ENCODE measurements at regions of chr14 and their contacts with region 1.

Region 1: GRCh38 chr14:95157327-95158189 is at the start of gene DICER1:
- DNase-seq: peak; percentile 94
- H3K4me3 Mint-ChIP-seq: peak within 1 kb of the TSS; percentile 92
- H3K27ac Mint-ChIP-seq: peak within 1 kb of the TSS; percentile 96
- H3K4me1 Mint-ChIP-seq: peaks cover 34% of the 10 kb centered on the region
- H3K27me3 Mint-ChIP-seq: no peaks in the 10 kb centered on the region
- total RNA-seq, gene DICER1: 38.1 to 42.3 TPM

Region 2: GRCh38 chr14:94080471-94081289 is 1076.9 kb before region 1 on chr14 and contains the start of gene DDX24:
- CTCF ChIA-PET with region 1: no interaction called
- intact Hi-C with region 1: loop called (anchors 5 kb)
- DNase-seq: peak; percentile 98
- H3K4me3 Mint-ChIP-seq: peak within 1 kb of the TSS; percentile 98
- H3K27ac Mint-ChIP-seq: peak within 1 kb of the TSS; percentile 98
- H3K4me1 Mint-ChIP-seq: peaks cover 44% of the 10 kb centered on the region
- H3K27me3 Mint-ChIP-seq: no peaks in the 10 kb centered on the region
- total RNA-seq, gene DDX24: 190 to 200 TPM

Region 3: GRCh38 chr14:95140060-95140858 is 17.3 kb before region 1 on chr14:
- CTCF ChIA-PET with region 1: interaction called, 4 read pairs
- intact Hi-C with region 1: loop called (anchors 1 kb)
- DNase-seq: no peak
- H3K4me3 Mint-ChIP-seq: no peak overlapping the region
- H3K27ac Mint-ChIP-seq: peak overlapping the region; percentile 39
- H3K4me1 Mint-ChIP-seq: peaks cover 71% of the 10 kb centered on the region
- H3K27me3 Mint-ChIP-seq: no peaks in the 10 kb centered on the region

Region 4: DNA sequence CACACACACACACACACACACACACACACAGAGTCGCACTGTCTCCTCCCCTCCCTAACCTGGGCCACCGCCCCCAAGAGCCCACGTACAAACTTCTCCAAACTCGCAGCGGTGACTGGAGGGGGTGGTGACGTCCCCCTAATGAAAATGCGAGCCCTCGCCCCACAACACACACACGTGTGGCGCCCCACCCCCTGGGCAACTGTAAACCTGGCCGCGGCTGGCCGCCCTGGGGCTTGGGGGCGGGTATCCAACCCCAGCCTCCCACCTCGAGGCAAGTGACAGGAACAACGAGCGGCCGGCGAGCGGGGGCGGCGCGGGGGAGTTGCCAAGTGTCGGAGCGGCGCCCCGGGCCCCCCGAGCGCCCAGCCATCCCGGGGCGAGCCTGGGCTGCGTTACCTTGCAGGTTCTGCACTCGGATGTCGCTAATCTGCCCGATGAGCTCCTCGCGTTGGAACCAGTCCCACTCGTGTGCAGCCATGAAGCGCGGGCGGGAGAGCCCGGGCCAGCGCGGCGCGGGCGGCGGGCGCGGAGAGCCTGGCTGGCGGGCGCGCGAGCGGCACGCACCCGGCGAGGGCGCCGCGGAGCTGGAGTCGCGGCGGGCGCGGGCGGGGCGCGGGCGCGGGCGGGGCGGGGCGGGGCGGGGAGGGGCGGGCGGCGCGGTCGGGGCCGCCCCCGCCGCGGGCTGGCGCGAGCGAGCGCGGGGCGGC is 161.9 kb after region 1 on chr14 and contains the start of gene CLMN:
- CTCF ChIA-PET with region 1: no interaction called
- intact Hi-C with region 1: loop called (anchors 5 kb)
- DNase-seq: peak; percentile 35
- H3K4me3 Mint-ChIP-seq: peak within 1 kb of the TSS; percentile 69
- H3K27ac Mint-ChIP-seq: no peak within 1 kb of the TSS
- H3K4me1 Mint-ChIP-seq: peaks cover 11% of the 10 kb centered on the region
- H3K27me3 Mint-ChIP-seq: peaks cover 22% of the 10 kb centered on the region
- total RNA-seq, gene CLMN: 1.9 to 2.6 TPM

Region 5: DNA sequence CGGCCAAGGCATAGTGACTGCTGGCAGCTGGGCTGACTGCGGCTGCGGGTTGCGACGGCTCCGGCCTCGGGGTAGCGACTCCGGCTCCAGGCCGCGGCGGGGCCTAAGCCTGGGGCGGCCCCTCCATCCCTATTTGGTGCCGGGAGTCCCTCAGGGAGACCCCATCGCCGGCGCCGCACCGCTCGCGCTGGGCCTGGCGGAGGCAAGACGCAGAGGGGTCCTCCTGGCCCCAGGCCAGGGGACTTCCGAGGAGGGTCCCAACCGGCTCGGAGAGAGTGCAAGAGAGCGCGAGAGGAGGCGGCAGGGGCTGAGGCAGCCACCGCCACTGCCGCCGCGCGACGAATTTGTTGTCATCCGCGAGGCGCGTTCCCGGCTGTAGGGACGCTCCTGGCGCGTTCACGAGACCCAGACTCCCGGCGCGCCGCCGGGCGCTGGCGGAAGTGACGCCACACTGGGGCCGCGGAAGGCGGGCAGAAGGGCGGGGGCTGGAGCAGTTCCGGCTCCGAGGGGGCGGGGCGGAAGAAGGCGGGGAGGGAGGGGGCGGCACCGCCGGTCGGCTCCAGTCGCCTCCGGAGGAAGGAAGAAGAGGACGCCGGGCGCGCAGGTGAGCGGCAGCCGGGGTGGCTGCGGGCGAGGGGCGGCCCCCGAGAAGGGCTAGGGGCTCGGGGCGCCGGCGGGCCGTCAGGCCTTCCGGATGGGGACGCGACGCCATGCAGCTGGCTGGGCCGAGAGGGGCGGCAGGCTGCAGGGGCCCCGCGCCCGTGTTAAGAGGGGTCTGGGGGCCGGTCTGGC is 1205.6 kb after region 1 on chr14 and contains the starts of genes ATG2B and GSKIP:
- CTCF ChIA-PET with region 1: no interaction called
- intact Hi-C with region 1: loop called (anchors 10 kb)
- DNase-seq: peak; percentile 97
- H3K4me3 Mint-ChIP-seq: peak within 1 kb of the TSS; percentile 92
- H3K27ac Mint-ChIP-seq: peak within 1 kb of the TSS; percentile 84
- H3K4me1 Mint-ChIP-seq: peaks cover 54% of the 10 kb centered on the region
- H3K27me3 Mint-ChIP-seq: no peaks in the 10 kb centered on the region
- total RNA-seq, gene ATG2B: 12.8 to 15.3 TPM
- total RNA-seq, gene GSKIP: 17.8 to 20.4 TPM

Region 6: GRCh38 chr14:96602186-96602585 is 1444.6 kb after region 1 on chr14:
- CTCF ChIA-PET with region 1: no interaction called
- intact Hi-C with region 1: no loop called
- DNase-seq: no peak
- H3K4me3 Mint-ChIP-seq: no peak overlapping the region
- H3K27ac Mint-ChIP-seq: no peak overlapping the region
- H3K4me1 Mint-ChIP-seq: no peaks in the 10 kb centered on the region
- H3K27me3 Mint-ChIP-seq: no peaks in the 10 kb centered on the region

Measured in activated naive CD4-positive, alpha-beta T cell treated with anti-CD3 and anti-CD28 coated beads for 36 hours (primary cell).